MCF 10A (cell line): ENCODE measurements at regions of chr12 and their contacts with region 1.

Region 1: GRCh38 chr12:76348079-76348901 is at the start of gene BBS10:
- DNase-seq: peak; percentile 92
- H3K4me3 Mint-ChIP-seq: peak within 1 kb of the TSS; percentile 86
- H3K27ac Mint-ChIP-seq: peak within 1 kb of the TSS; percentile 39
- H3K4me1 Mint-ChIP-seq: peaks cover 17% of the 10 kb centered on the region
- H3K27me3 Mint-ChIP-seq: no peaks in the 10 kb centered on the region
- CTCF ChIP-seq: peak; percentile 40
- total RNA-seq, gene BBS10: 5.9 and 10.2 TPM in 2 replicates

Region 2: GRCh38 chr12:75623631-75624118 is 724.6 kb before region 1 on chr12:
- CTCF ChIA-PET with region 1: interaction called, 6 read pairs
- POLR2A ChIA-PET with region 1: interaction called, 5 read pairs
- intact Hi-C with region 1: loop called (anchors 1 kb)
- DNase-seq: peak; percentile 97
- H3K4me3 Mint-ChIP-seq: no peak overlapping the region
- H3K27ac Mint-ChIP-seq: peak overlapping the region; percentile 82
- H3K4me1 Mint-ChIP-seq: peaks cover 24% of the 10 kb centered on the region
- H3K27me3 Mint-ChIP-seq: no peaks in the 10 kb centered on the region
- CTCF ChIP-seq: peak; percentile 68

Region 3: GRCh38 chr12:76049575-76050251 is 298.6 kb before region 1 on chr12:
- CTCF ChIA-PET with region 1: interaction called, 10 read pairs
- POLR2A ChIA-PET with region 1: interaction called, 18 read pairs
- intact Hi-C with region 1: no loop called
- DNase-seq: no peak
- H3K4me3 Mint-ChIP-seq: no peak overlapping the region
- H3K27ac Mint-ChIP-seq: no peak overlapping the region
- H3K4me1 Mint-ChIP-seq: no peaks in the 10 kb centered on the region
- H3K27me3 Mint-ChIP-seq: no peaks in the 10 kb centered on the region
- CTCF ChIP-seq: no peak

Region 4: DNA sequence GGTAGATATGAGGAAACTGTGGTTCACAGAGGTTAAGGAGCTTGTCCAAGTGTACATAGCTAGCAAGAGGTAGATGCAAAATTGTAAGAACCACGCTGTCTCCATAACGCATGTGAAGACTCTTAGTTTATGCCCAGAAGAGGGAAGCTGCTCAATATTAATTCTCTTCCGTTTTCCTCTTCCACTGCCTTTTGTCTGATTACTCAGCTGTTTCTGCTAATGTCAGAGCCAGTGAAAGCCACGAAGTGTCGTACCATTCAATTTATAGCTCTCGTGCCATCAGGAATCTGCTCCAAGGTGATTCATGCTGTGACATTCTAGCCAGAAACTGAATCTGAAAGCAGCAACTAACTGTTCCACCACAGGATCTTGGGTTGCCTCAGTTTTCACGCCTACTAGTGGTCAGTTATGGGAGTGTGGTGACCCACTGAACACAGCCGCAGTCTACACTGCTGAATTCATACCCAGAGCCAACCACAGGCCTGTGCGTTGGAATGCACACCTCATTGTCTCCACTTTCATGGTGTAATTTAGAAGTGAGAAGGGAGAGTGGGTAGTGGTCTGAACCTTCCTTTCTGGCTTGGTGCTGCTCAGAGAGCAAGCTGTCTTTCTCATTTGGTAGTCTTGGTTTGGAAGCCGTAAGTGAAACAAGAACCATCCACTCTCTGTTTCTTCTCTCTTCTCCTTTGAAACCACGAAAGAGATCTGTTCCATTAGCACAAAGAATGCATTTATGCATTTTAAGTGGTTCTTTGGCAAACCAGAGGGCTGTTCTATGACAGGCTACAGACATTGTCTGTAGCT is 189.6 kb before region 1 on chr12:
- CTCF ChIA-PET with region 1: interaction called, 3 read pairs
- POLR2A ChIA-PET with region 1: no interaction called
- intact Hi-C with region 1: loop called (anchors 1 kb)
- DNase-seq: peak; percentile 74
- H3K4me3 Mint-ChIP-seq: no peak overlapping the region
- H3K27ac Mint-ChIP-seq: peak overlapping the region; percentile 16
- H3K4me1 Mint-ChIP-seq: peaks cover 8% of the 10 kb centered on the region
- H3K27me3 Mint-ChIP-seq: no peaks in the 10 kb centered on the region
- CTCF ChIP-seq: peak; percentile 40

Region 5: DNA sequence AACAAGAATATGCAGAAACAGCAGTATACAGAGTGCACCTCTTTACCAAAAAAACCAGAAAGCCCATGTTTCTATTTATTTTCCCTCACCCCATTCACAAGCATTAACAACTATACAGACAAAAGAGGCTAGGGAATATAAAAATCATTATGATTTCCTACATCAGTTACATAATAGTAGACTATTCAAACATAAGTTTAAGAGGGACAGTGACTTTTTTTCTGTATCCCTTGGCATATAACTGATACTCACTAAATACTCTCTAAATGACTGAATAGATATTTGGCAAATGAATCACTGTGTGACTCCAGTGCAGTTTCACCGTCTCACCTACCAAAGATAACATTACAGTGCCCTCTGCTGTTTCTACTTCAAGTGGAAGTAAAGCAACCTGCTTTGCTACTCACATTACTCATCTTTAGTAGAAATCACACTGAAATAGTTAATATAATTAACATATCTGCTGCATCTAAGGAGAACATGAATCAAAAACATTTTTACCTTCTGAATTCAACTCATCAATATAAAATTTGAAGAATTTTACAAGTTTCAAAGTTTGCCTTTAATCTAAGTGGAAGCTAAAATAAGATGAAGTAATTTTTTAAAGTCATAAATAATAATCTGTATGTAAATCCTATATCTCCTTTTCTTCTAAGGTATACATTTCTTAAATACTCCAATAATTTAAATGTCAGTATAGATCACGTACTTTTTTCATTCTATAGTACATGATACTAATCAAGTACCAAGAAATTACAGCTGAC is 107.5 kb after region 1 on chr12:
- CTCF ChIA-PET with region 1: interaction called, 24 read pairs
- POLR2A ChIA-PET with region 1: interaction called, 39 read pairs
- intact Hi-C with region 1: loop called (anchors 1 kb)
- DNase-seq: peak; percentile 87
- H3K4me3 Mint-ChIP-seq: no peak overlapping the region
- H3K27ac Mint-ChIP-seq: peak overlapping the region; percentile 84
- H3K4me1 Mint-ChIP-seq: peaks cover 21% of the 10 kb centered on the region
- H3K27me3 Mint-ChIP-seq: no peaks in the 10 kb centered on the region
- CTCF ChIP-seq: peak; percentile 49

Region 6: GRCh38 chr12:76518699-76519098 is 170.4 kb after region 1 on chr12:
- CTCF ChIA-PET with region 1: no interaction called
- POLR2A ChIA-PET with region 1: no interaction called
- intact Hi-C with region 1: no loop called
- DNase-seq: no peak
- H3K4me3 Mint-ChIP-seq: no peak overlapping the region
- H3K27ac Mint-ChIP-seq: no peak overlapping the region
- H3K4me1 Mint-ChIP-seq: no peaks in the 10 kb centered on the region
- H3K27me3 Mint-ChIP-seq: no peaks in the 10 kb centered on the region
- CTCF ChIP-seq: no peak

Region 7: DNA sequence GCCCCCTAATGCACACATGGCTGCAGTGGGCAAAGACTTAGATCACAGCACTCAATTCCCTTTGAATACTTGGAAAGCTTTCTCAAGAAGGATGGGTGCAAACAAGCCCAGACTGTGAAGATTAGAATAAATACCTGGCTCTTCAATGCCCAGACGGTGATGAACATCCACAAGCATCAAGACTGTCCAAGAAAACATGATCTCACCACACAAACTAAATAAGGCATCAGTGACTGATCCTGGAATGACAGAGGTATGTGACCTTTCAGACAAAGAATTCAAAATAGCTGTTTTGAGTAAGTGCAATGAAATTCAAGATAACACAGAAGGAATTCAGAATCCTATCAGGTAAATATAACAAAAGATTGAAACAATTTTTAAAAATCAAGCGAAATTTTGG is 371.8 kb after region 1 on chr12:
- CTCF ChIA-PET with region 1: no interaction called
- POLR2A ChIA-PET with region 1: no interaction called
- intact Hi-C with region 1: no loop called
- DNase-seq: no peak
- H3K4me3 Mint-ChIP-seq: no peak overlapping the region
- H3K27ac Mint-ChIP-seq: no peak overlapping the region
- H3K4me1 Mint-ChIP-seq: no peaks in the 10 kb centered on the region
- H3K27me3 Mint-ChIP-seq: no peaks in the 10 kb centered on the region
- CTCF ChIP-seq: no peak